Activated B cell treated with CpG ODN at 0.5 μM for 24 hours (primary cell): ENCODE measurements at regions of chr1 and their contacts with region 1.

Region 1: GRCh38 chr1:113978863-113979702 is at the start of gene OLFML3:
- DNase-seq: no peak
- ATAC-seq: no peak
- H3K4me3 Mint-ChIP-seq: no peak within 1 kb of the TSS
- H3K27ac Mint-ChIP-seq: no peak within 1 kb of the TSS
- H3K4me1 Mint-ChIP-seq: peaks cover 14% of the 10 kb centered on the region
- H3K27me3 Mint-ChIP-seq: no peaks in the 10 kb centered on the region
- CTCF ChIP-seq: no peak
- total RNA-seq, gene OLFML3: 0.27 and 0.29 TPM in 2 replicates

Region 2: GRCh38 chr1:114040326-114041015 is 61.4 kb after region 1 on chr1:
- CTCF ChIA-PET with region 1: no interaction called
- POLR2A ChIA-PET with region 1: no interaction called
- intact Hi-C with region 1: no loop called
- DNase-seq: no peak
- ATAC-seq: no peak
- H3K4me3 Mint-ChIP-seq: no peak overlapping the region
- H3K27ac Mint-ChIP-seq: no peak overlapping the region
- H3K4me1 Mint-ChIP-seq: no peaks in the 10 kb centered on the region
- H3K27me3 Mint-ChIP-seq: no peaks in the 10 kb centered on the region
- CTCF ChIP-seq: no peak

Region 3: GRCh38 chr1:114282751-114283403 is 303.8 kb after region 1 on chr1:
- CTCF ChIA-PET with region 1: interaction called, 15 read pairs
- POLR2A ChIA-PET with region 1: no interaction called
- intact Hi-C with region 1: loop called (anchors 1 kb)
- DNase-seq: peak; percentile 56
- ATAC-seq: peak; percentile 74
- H3K4me3 Mint-ChIP-seq: no peak overlapping the region
- H3K27ac Mint-ChIP-seq: no peak overlapping the region
- H3K4me1 Mint-ChIP-seq: no peaks in the 10 kb centered on the region
- H3K27me3 Mint-ChIP-seq: peaks cover 2% of the 10 kb centered on the region
- CTCF ChIP-seq: no peak